Vagina (tissue), 2 donors: ENCODE measurements at regions of chr2 and their contacts with region 1.

Region 1: GRCh38 chr2:121530212-121530705 is 421 bp upstream of the RNU4ATAC start:
- DNase-seq: no peak
- H3K4me3 ChIP-seq: peak overlapping the region; percentile 77 to 79
- H3K27ac ChIP-seq: peak overlapping the region; percentile 93
- H3K4me1 ChIP-seq: peaks cover 59% of the 10 kb centered on the region
- H3K27me3 ChIP-seq: no peaks in the 10 kb centered on the region
- CTCF ChIP-seq: no peak
- POLR2A ChIP-seq: no peak

Region 2: DNA sequence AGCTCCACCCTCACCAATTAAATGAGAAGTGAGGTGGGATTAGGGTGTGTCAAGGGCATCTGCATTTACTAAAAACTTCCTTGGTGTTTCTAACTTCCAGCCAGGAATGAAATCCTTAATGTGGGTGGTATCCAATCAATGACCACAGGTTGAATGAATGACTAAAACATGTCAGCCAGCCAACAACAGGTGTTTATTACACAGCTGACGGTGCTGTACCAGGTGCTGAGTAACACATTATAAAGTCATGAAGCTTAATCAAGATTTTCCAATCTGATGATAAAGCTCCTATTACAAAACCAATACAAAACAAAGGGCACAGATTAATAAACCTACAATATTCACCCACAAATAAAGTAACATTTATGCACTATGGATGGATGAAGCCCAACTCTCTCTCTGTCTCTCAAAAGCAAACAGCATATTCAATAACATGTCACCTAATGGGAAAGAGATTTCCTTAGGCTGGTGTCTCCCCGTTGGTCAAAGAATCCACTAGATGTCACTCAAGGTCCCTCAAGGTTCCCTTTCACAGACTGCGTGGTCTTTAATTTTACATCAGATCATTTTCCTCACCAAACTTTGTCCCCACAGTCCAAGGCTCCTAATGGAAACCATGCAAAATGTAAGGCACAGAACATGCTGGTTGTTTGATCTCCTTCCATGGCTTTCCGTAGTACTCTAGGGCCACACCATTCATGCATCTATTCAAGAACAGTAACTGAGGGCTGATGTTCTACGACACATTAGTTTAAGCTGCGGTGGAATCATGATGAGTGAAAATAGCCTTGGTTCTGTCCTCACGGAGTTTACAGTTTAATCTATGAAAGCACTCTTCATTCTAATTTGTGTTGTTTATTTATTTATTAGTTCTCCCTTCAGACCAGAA is 1777.0 kb before region 1 on chr2:
- intact Hi-C with region 1: no loop called
- DNase-seq: no peak
- H3K4me3 ChIP-seq: no peak overlapping the region
- H3K27ac ChIP-seq: no peak overlapping the region
- H3K4me1 ChIP-seq: peaks cover 7% of the 10 kb centered on the region
- H3K27me3 ChIP-seq: no peaks in the 10 kb centered on the region
- CTCF ChIP-seq: peak in 1 of 3 experiments; percentile 41
- POLR2A ChIP-seq: no peak

Region 3: GRCh38 chr2:121649596-121650314 is 119.5 kb after region 1 on chr2:
- intact Hi-C with region 1: loop called (anchors 2 kb)
- DNase-seq: peak in 1 of 2 donors; percentile 97
- H3K4me3 ChIP-seq: peak overlapping the region; percentile 85 to 94
- H3K27ac ChIP-seq: peak overlapping the region; percentile 97
- H3K4me1 ChIP-seq: peaks cover 53% of the 10 kb centered on the region
- H3K27me3 ChIP-seq: no peaks in the 10 kb centered on the region
- CTCF ChIP-seq: no peak
- POLR2A ChIP-seq: no peak